Right ventricle myocardium superior (tissue), 1 donor: ENCODE measurements at regions of chr15 and their contacts with region 1.

Region 1: GRCh38 chr15:99213187-99213811 is 36.1 kb downstream of the TTC23 start:
- DNase-seq: peak; percentile 91
- ATAC-seq: peak; percentile 93

Region 2: DNA sequence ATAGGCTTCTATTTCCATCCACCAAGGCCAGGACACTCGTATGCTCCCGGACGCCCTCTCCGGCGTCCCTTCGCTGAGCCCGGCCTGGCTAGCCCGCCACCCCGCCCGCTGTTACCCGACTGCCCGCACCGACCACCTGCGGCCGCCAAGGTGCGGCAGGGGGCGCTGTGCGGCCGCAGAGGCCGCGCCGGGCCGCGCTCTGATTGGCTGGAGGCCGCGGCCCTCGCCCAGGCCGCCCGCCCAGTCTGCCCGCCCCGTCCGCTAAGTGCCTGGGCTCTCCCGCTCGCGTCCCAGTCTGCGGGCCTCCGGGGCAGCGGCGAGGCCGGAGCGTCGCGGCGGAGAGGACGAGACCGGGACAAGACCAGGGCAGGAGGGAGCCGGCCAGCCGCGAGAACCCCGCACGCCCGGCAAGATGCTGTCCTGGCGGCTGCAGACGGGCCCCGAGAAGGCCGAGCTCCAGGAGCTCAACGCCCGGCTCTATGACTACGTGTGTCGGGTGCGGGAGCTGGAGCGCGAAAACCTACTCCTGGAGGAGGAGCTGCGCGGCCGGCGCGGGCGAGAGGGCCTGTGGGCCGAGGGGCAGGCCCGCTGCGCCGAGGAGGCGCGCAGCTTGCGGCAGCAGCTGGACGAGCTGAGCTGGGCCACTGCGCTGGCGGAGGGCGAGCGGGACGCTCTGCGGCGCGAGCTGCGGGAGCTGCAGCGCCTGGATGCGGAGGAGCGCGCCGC is 108.3 kb before region 1 on chr15 and contains the start of gene SYNM:
- intact Hi-C with region 1: loop called (anchors 2 kb)
- DNase-seq: peak; percentile 88
- ATAC-seq: peak; percentile 84
- total RNA-seq, gene SYNM: 295 TPM